ENCODE measurements at regions of chr14 and their contacts with region 1.

Region 1: DNA sequence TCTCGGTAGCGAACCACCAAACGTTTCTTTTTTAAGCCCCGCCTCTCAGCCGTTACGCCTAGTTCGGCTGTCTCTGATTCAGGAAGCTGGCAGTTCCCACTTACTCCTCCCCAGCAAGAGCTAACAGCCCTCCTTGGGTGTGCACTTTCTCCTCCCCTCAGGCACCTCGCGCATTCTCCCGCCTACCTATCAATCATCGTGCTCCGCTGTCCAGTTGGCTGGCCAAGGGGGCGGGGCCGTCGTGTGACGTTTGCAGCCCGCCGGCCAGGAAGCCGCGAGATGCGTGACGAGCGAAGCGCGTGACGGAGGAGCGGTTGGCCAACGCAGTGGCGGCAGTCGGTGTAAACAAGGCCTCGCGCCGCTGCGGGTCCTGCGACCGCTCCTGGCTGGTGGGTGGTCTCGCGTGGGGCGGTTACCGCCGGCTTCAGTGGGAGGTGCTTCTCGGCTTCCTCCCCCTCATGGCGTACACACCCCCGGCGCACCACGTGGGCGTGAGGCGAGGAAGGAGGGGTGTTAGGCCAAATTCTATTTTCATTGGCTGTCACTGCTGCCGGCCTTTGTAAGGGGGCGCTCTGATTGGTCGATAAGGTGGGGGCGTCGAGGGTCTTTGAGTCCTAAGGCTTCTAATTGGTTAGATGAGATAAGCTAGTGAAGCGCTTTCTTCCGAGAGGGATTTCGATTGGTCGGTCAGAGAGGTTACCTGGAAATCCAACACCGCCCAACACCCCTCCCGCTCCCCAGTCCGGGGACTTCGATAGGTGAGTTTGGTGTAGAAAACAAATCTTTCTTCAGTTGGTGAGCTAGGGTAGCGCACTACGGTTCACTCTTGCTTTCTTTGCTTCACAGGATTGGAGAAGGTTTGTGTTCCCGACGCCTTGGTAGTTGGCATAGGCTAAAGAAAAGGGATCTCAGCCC is at the starts of genes DCAF11 and NRL:
- DNase-seq: peak; percentile 98
- H3K4me3 Mint-ChIP-seq: peak within 1 kb of the TSS; percentile 99
- H3K27ac Mint-ChIP-seq: peak within 1 kb of the TSS; percentile 98
- H3K4me1 Mint-ChIP-seq: peaks cover 34% of the 10 kb centered on the region
- H3K27me3 Mint-ChIP-seq: no peaks in the 10 kb centered on the region
- total RNA-seq, gene DCAF11: 69.9 and 71.6 TPM in 2 replicates
- total RNA-seq, gene NRL: 2.1 and 2.7 TPM in 2 replicates

Region 2: GRCh38 chr14:23555882-23556699 is 558.7 kb before region 1 on chr14 and contains the start of gene THTPA:
- intact Hi-C with region 1: loop called (anchors 5 kb)
- DNase-seq: peak; percentile 88
- H3K4me3 Mint-ChIP-seq: peak within 1 kb of the TSS; percentile 97
- H3K27ac Mint-ChIP-seq: peak within 1 kb of the TSS; percentile 97
- H3K4me1 Mint-ChIP-seq: peaks cover 31% of the 10 kb centered on the region
- H3K27me3 Mint-ChIP-seq: no peaks in the 10 kb centered on the region
- total RNA-seq, gene THTPA: 14.3 and 14.5 TPM in 2 replicates

Region 3: DNA sequence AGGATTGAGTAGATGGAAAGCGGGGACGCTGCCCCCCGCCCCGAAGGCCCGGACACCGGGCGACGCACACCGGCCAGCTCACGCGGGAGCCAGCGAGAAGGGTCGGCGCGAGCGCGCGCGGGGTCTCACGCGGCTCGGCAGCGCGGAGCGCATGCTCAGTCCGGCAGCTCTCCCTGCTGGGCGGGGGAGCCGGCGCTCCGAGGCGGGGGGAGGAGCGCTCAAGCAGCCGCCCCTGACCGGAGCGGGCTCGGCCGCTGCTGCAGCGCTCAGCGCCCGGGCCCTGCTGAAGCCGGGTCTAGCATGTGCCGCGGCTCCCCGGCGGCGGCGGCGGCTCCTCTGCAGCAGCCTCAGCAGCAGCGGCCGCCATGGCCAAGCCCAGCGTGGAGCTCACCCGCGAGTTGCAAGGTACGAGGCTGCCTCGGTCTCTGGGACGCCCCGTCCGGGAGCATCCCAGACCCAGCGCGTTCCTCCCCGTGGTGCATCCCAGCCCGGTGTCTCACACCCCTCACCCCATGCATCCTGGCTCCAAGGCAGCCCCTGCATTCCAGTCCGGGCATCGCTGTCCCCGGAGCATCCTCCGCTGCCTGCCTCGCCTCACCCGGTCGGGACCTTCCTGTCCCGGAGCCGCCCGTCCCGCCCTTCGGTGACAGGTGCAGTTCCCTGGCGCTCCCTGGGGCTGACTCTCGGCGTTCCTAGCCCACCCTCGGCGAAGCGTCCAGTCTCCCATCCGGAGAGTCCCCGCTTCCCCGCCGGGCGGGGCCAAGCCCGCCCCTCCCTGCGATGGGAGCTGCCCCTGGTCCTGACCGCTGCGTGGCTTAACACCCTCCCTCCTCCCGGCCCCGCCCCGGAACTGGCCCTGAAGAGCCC is 62.8 kb before region 1 on chr14 and contains the start of gene CARMIL3:
- intact Hi-C with region 1: loop called (anchors 1 kb)
- DNase-seq: peak; percentile 67
- H3K4me3 Mint-ChIP-seq: peak within 1 kb of the TSS; percentile 85
- H3K27ac Mint-ChIP-seq: peak within 1 kb of the TSS; percentile 76
- H3K4me1 Mint-ChIP-seq: peaks cover 22% of the 10 kb centered on the region
- H3K27me3 Mint-ChIP-seq: peaks cover 17% of the 10 kb centered on the region
- total RNA-seq, gene CARMIL3: 3.0 and 3.4 TPM in 2 replicates

Region 4: DNA sequence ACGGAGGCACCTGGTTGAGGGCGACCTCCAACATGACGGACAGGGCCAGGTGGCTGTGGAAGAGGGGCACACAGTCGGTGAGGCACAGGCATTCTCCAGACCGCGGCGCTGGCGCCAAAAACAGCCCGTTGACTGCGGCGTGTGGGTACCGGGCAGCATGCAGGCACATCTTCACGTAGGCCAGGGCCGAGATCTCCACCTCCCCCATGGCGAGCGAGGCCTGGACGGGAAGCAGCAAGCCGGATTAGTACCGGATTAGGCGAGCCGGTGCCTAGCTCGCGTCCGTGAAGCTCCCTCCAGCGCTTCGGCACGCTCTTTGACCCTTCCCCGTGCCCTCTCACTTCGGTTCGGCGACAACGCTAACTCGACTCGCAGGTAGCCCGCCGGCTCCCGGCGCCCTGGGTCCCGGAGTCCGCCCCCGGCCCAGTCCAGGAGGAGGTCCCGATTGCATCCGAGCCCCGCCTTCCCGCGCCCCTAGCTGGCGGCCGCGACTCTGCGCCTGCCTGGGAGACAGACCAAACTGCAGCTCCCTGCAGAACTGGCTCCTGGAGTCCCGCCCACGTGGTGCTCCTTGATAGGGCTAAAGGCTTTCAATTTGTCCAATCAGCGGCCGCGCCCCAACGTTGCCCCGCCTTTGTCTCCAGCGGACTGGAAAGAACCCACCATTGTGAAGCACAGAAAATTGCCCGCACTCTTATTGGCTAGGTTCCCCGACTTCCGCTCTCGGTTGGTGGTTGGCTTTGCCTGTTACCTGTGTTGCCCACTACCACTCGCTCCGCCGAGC is 26.5 kb after region 1 on chr14 and contains the start of gene EMC9:
- intact Hi-C with region 1: loop called (anchors 1 kb)
- DNase-seq: peak; percentile 100
- H3K4me3 Mint-ChIP-seq: peak within 1 kb of the TSS; percentile 98
- H3K27ac Mint-ChIP-seq: peak within 1 kb of the TSS; percentile 92
- H3K4me1 Mint-ChIP-seq: peaks cover 80% of the 10 kb centered on the region
- H3K27me3 Mint-ChIP-seq: no peaks in the 10 kb centered on the region
- total RNA-seq, gene EMC9: 22.9 and 28.3 TPM in 2 replicates

Region 5: DNA sequence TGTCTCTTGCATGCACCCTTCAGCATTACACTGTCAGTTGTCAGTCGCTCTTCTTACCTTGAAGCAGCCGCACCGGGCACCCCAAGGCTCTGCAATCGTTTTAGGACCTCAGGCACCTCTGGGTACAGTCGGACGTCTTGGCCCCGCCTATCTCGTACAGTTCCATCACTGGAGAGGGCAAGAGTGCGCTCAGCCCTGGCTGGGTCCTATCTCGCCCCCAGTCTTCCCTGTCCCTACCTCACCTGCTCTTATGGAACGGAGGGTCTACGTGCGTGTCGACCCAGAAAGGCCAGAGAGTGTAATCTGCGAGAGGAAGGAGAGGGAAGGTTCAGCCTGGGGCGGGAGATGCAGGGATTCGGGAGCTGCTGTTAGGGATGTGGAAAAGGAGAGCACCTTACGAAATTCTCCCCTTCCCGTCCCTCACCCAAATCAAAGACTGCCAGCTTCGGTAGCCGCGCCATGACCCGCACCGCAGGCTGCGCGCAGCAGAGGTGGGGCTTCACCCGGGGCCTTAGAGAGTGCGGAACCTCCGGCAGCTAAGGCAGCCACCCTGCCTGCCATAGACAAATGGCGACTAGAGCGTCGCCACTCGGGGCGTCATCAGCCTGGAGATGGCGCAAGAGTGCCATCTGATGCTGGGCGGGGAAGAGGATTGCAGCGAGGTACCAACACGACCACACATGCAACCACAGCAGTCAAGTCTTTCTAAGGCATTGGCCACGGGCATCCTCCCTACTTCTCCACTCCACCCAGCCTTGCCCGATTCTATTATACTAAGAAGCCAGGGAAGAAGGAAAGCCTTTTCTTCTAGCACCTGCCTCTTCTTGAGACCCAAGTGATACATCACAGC is 100.9 kb after region 1 on chr14 and contains the start of gene MDP1:
- intact Hi-C with region 1: loop called (anchors 1 kb)
- DNase-seq: peak; percentile 85
- H3K4me3 Mint-ChIP-seq: peak within 1 kb of the TSS; percentile 90
- H3K27ac Mint-ChIP-seq: peak within 1 kb of the TSS; percentile 96
- H3K4me1 Mint-ChIP-seq: peaks cover 43% of the 10 kb centered on the region
- H3K27me3 Mint-ChIP-seq: no peaks in the 10 kb centered on the region
- total RNA-seq, gene MDP1: 11.6 and 12.9 TPM in 2 replicates

Region 6: GRCh38 chr14:24442273-24443052 is 327.7 kb after region 1 on chr14 and contains the start of gene SDR39U1:
- intact Hi-C with region 1: loop called (anchors 5 kb)
- DNase-seq: peak; percentile 97
- H3K4me3 Mint-ChIP-seq: peak within 1 kb of the TSS; percentile 92
- H3K27ac Mint-ChIP-seq: peak within 1 kb of the TSS; percentile 91
- H3K4me1 Mint-ChIP-seq: peaks cover 45% of the 10 kb centered on the region
- H3K27me3 Mint-ChIP-seq: no peaks in the 10 kb centered on the region
- total RNA-seq, gene SDR39U1: 41.5 and 48.0 TPM in 2 replicates